ENCODE measurements at regions of chr1 and their contacts with region 1.

Region 1: DNA sequence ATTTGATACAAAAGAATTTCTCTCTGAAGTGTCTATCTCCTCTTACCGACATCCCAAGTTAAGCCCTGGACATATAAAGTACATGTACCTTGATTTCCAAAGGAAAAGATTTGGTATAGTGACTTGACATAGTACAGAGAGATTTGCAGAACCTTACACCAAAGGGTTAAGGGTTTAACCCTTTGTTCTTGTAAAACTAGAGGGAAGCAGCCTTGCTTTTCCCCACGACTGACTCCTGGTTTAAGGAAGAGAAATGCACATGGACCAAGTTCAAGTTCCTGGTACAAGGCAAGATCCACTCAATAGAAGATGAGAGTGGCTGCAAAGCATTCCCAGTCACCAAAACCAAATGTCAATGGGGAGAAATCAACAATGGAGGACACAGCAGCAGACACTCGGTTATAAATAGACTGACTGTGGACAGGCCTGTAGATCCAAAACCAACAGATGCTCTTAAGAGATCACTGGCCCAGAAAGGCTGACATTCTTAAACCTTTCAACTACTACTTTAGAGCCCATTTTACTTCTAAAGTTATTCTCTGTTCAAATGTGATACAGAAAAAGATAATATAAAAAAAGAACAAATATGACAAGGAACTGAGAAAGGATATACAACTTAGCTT is 69.4 kb downstream of the PUM1 start:
- DNase-seq: no peak
- ATAC-seq: no peak
- H3K4me3 ChIP-seq: no peak overlapping the region
- H3K27ac ChIP-seq: no peak overlapping the region
- H3K4me1 ChIP-seq: no peaks in the 10 kb centered on the region; a peak in 1 of 5 replicates
- H3K27me3 ChIP-seq: no peaks in the 10 kb centered on the region
- CTCF ChIP-seq: no peak
- EP300 ChIP-seq: no peak
- POLR2A ChIP-seq: no peak
- RAD21 ChIP-seq: no peak

Region 2: GRCh38 chr1:30271401-30272276 is 724.5 kb before region 1 on chr1:
- CTCF ChIA-PET with region 1: no interaction called
- POLR2A ChIA-PET with region 1: no interaction called
- in situ Hi-C with region 1: no loop called
- intact Hi-C with region 1: no loop called
- DNase-seq: no peak
- ATAC-seq: no peak
- H3K4me3 ChIP-seq: no peak overlapping the region
- H3K27ac ChIP-seq: no peak overlapping the region
- H3K4me1 ChIP-seq: no peaks in the 10 kb centered on the region
- H3K27me3 ChIP-seq: peaks cover 0 to 6% of the 10 kb centered on the region in 2 experiments; a peak in 1 of 5 replicates
- CTCF ChIP-seq: no peak
- EP300 ChIP-seq: no peak
- POLR2A ChIP-seq: no peak
- RAD21 ChIP-seq: no peak

Region 3: GRCh38 chr1:30911046-30911954 is 84.8 kb before region 1 on chr1:
- CTCF ChIA-PET with region 1: no interaction called
- POLR2A ChIA-PET with region 1: no interaction called
- in situ Hi-C with region 1: no loop called
- intact Hi-C with region 1: no loop called
- DNase-seq: peak; percentile 80 to 94 (median 86)
- ATAC-seq: peak; percentile 78
- H3K4me3 ChIP-seq: no peak overlapping the region
- H3K27ac ChIP-seq: no peak overlapping the region
- H3K4me1 ChIP-seq: peaks cover 31 to 53% of the 10 kb centered on the region in 2 experiments
- H3K27me3 ChIP-seq: no peaks in the 10 kb centered on the region
- CTCF ChIP-seq: peak; percentile 96 to 97 (median 96)
- EP300 ChIP-seq: peak; percentile 31; the same call in 1 of the 2 replicates
- POLR2A ChIP-seq: no peak
- RAD21 ChIP-seq: peak; percentile 100

Region 4: GRCh38 chr1:30984165-30984889 is 11.8 kb before region 1 on chr1:
- CTCF ChIA-PET with region 1: no interaction called
- POLR2A ChIA-PET with region 1: interaction called, 13 read pairs
- in situ Hi-C with region 1: no loop called
- intact Hi-C with region 1: no loop called
- DNase-seq: no peak
- ATAC-seq: no peak
- H3K4me3 ChIP-seq: no peak overlapping the region
- H3K27ac ChIP-seq: no peak overlapping the region
- H3K4me1 ChIP-seq: peaks cover 4 to 6% of the 10 kb centered on the region in 2 experiments; a peak in 3 of 5 replicates
- H3K27me3 ChIP-seq: no peaks in the 10 kb centered on the region
- CTCF ChIP-seq: no peak
- EP300 ChIP-seq: no peak
- POLR2A ChIP-seq: no peak
- RAD21 ChIP-seq: no peak

Measured in K562 (cell line).